Left colon (tissue), 2 donors: ENCODE measurements at regions of chr4 and their contacts with region 1.

Region 1: GRCh38 chr4:155777971-155778735 is 19.3 kb downstream of the GUCY1B1 start:
- DNase-seq: no peak
- ATAC-seq: no peak

Region 2: DNA sequence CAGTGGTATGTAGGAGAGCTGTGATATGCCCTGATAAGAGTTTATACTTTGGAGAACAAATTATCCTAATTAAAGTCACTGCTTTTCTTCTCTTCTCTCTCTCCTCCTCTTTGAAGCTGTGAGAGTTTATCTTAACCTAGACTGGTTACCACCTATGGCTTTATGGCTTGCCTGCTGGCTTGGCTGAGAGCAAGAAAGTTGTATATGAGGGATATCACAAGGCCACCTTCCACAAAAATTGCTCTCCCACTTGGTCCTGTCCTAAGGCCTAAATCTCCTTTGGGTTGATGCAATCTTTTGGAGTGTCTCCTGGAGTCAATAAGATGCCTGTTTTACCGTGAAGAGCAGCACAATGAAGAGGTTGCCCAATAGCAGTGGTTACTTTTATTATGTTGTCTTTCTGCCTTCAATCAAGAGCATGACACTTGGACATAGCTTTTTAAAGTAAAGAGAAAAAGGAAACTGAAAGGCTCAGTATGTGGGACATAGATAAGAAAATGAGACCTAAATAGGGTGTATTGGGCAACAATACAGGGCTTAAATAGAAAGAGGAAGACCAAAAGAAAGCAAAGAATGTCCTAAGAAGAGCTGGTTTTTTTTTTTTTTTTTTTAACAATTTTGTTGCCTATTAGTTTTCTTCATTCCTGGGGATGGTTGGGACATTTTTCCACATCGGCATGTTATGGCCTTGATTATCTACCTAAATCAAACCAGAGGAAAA is 102.3 kb before region 1 on chr4:
- intact Hi-C with region 1: loop called in 1 of 2 experiments (anchors 10 kb)
- DNase-seq: no peak
- ATAC-seq: peak; percentile 25

Region 3: GRCh38 chr4:155722816-155723499 is 55.2 kb before region 1 on chr4:
- intact Hi-C with region 1: no loop called
- DNase-seq: no peak
- ATAC-seq: no peak

Region 4: GRCh38 chr4:155984106-155984797 is 206.1 kb after region 1 on chr4:
- intact Hi-C with region 1: no loop called
- DNase-seq: no peak
- ATAC-seq: no peak

Region 5: DNA sequence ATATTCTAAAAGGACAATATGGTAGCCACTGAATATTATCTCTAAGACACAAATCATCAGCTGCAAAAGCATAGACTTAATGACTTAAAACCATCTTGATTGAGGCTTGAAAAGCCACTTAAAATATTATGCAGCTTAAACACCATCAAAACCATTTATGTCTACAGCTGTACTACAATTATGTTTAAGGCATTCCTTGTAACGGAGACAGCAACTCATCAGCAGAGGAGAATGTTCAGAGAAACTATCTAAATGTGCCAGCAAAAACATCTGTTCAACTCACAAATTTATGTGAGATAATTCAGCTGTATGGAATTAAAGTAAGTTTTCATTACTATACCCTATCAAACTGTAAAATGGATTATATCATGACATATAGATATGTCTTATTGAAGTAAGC is 323.4 kb after region 1 on chr4:
- intact Hi-C with region 1: no loop called
- DNase-seq: no peak
- ATAC-seq: no peak

Region 6: DNA sequence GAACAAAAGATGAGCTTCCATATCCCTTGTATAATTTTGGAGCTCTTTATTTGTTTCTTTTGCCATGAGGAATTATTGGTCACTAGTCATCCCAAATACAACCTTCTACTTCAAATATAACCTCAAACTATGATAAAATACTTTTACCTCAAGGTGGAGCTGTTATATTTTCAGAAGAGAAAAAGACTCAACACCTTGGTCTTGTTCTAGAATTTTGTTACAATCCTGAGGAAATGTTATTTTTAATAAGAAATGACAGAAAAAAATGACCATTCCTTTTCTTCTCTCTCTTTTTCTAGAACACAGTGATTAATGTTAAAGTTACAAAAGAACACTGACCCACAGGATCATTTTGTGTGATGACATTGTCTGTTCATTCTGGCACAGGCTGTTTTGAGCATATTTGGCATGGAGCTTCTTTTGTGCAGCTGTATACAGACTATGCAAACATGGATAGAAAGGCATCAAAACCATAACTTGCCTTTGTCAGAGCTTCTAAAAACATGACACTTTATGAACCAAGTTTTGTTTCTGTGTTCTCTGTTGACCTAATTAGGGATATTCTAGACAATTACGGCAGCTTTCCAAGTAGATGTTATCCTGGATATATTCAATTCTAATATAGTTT is 335.1 kb after region 1 on chr4:
- intact Hi-C with region 1: no loop called
- DNase-seq: no peak
- ATAC-seq: no peak